Activated CD4-positive, alpha-beta T cell treated with anti-CD3 and anti-CD28 coated beads, Interleukin-2, amount 10 ng/mL, durations not matched to agents 24 days and 14 days (primary cell): ENCODE measurements at regions of chr3 and their contacts with region 1.

Region 1: GRCh38 chr3:71305231-71306206 is 278.0 kb downstream of the FOXP1 start:
- DNase-seq: peak; percentile 68
- H3K4me3 Mint-ChIP-seq: peak overlapping the region; percentile 84
- H3K27ac Mint-ChIP-seq: peak overlapping the region; percentile 78
- H3K4me1 Mint-ChIP-seq: peaks cover 62% of the 10 kb centered on the region
- H3K27me3 Mint-ChIP-seq: peaks cover 30% of the 10 kb centered on the region

Region 2: DNA sequence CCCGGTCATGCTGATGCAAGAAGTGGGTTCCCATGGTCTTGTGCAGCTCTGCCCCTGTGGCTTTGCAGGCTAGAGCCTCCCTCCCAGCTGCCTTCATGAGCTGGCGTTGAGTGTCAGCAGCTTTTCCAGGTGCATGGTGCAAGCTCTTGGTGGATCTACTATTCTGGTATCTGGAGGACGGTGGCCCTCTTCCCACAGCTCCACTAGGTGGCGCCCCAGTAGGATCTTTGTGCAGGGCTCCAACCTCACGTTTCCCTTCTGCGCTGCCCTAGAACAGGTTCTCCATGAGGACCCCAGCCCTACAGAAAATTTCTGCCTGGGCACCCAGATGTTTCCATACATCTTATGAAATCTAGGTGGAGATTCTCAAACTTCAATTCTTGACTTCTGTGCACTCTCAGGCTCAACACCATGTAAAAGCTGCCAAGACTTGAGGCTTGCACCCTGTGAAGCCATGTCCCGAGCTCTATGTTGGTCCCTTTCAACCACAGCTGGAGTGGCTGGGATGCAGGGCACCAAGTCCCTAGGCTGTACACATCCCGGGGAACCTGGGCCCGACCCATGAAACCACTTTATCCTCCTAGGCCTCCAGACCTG is 754.7 kb before region 1 on chr3:
- intact Hi-C with region 1: loop called (anchors 2 kb)
- DNase-seq: peak; percentile 90
- H3K4me3 Mint-ChIP-seq: no peak overlapping the region
- H3K27ac Mint-ChIP-seq: no peak overlapping the region
- H3K4me1 Mint-ChIP-seq: no peaks in the 10 kb centered on the region
- H3K27me3 Mint-ChIP-seq: peaks cover 12% of the 10 kb centered on the region

Region 3: DNA sequence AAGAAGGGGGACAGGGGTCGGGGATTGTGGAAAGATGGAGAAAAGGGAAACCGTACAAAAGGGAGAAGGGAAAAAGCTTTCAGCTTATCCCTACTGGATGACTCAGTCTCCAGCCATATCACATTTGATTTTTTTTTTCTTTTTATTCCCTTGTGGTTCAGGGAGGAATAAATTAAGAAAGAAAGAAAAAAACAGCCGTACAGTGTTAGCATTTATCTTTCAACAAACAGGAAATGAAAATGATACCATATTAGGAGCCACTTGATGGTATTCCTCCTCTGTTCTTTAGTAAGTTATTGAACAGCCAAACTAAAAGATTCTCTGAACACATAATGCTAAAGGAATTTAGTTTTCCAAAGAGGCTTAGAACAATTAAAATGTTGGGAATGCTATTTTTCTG is 316.3 kb before region 1 on chr3:
- intact Hi-C with region 1: no loop called
- DNase-seq: no peak
- H3K4me3 Mint-ChIP-seq: no peak overlapping the region
- H3K27ac Mint-ChIP-seq: no peak overlapping the region
- H3K4me1 Mint-ChIP-seq: peaks cover 37% of the 10 kb centered on the region
- H3K27me3 Mint-ChIP-seq: no peaks in the 10 kb centered on the region

Region 4: GRCh38 chr3:71006810-71007785 is 298.4 kb before region 1 on chr3:
- intact Hi-C with region 1: loop called (anchors 1 kb)
- DNase-seq: no peak
- H3K4me3 Mint-ChIP-seq: no peak overlapping the region
- H3K27ac Mint-ChIP-seq: peak overlapping the region; percentile 12
- H3K4me1 Mint-ChIP-seq: peaks cover 54% of the 10 kb centered on the region
- H3K27me3 Mint-ChIP-seq: no peaks in the 10 kb centered on the region

Region 5: GRCh38 chr3:71087143-71088018 is 218.1 kb before region 1 on chr3:
- intact Hi-C with region 1: loop called (anchors 1 kb)
- DNase-seq: peak; percentile 83
- H3K4me3 Mint-ChIP-seq: peak overlapping the region; percentile 62
- H3K27ac Mint-ChIP-seq: peak overlapping the region; percentile 91
- H3K4me1 Mint-ChIP-seq: peaks cover 70% of the 10 kb centered on the region
- H3K27me3 Mint-ChIP-seq: no peaks in the 10 kb centered on the region

Region 6: DNA sequence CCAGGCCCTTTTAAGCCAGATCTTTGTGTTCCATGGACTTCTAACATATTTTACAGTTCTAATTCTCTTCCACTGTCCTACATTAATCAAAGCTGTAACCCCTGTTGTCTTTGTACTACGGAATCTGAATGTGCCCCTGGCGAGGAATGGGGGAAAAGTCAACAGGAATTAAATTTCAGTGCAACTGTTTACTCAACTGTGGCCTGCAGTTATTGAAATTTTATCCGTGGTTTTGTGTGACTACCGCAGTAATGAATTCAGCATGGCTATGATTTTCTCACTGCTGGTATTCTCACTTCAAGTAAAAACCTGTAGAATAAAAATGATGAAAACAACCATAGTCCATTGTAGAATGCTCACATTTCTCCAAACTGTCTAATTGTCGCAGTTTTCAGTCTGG is 110.0 kb before region 1 on chr3:
- intact Hi-C with region 1: loop called (anchors 1 kb)
- DNase-seq: no peak
- H3K4me3 Mint-ChIP-seq: no peak overlapping the region
- H3K27ac Mint-ChIP-seq: no peak overlapping the region
- H3K4me1 Mint-ChIP-seq: peaks cover 25% of the 10 kb centered on the region
- H3K27me3 Mint-ChIP-seq: no peaks in the 10 kb centered on the region

Region 7: DNA sequence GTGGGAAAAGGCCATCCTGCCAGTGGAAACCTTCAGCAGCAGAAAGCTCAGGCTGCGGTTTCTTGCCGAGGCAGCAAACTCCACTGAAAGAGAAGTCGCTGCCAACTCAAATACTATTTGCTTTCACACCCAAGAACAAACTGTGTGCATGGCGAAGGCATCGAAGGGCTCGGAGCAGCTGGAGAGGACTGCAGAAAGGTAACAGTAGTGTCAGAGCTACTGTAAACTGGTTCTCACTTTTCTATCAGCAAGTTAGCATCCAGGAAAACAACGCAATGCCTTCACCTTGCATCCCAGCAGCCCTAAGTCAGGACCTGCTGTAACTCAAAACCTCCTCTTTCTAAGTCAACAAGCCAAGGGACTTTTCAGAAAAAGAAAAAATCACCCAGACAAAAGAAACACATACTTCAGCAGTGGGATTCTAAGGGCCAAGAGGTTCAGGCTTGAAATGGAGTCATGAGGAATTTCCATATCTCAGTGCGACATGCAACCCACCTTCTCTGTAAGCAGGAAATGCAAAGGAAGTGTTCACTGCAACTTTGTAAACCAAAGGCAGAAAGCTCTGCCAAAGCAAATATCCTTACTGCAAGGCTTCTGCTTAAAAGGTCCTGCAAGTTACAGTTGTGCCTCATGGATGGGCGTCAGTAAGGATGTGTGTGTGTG is 84.5 kb after region 1 on chr3:
- intact Hi-C with region 1: loop called (anchors 1 kb)
- DNase-seq: peak; percentile 69
- H3K4me3 Mint-ChIP-seq: peak overlapping the region; percentile 46
- H3K27ac Mint-ChIP-seq: peak overlapping the region; percentile 62
- H3K4me1 Mint-ChIP-seq: peaks cover 34% of the 10 kb centered on the region
- H3K27me3 Mint-ChIP-seq: peaks cover 31% of the 10 kb centered on the region